GM10248 (cell line): ENCODE measurements at regions of chr6 and their contacts with region 1.

Region 1: GRCh38 chr6:136643850-136644596 is 93.8 kb upstream of the MAP7 start:
- DNase-seq: peak; percentile 56
- CTCF ChIP-seq: peak; percentile 80

Region 2: DNA sequence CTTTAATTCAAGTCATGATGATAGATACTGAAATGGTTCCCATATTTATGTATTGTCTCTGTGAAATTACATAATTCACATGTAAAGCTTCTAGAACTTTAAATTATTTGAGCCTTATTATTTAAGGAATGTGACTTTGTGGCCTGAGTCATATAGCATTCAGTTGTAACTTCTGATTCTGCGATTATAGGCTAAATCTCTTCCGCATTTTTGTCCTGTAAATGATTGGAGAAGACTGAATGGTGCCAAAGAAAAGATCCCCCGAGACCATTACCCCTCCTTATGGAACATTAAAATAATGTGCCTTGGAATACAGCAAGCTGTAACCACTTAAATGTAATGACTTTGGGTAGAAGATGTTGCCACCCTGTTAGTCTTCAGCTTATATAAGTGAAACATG is 30.5 kb before region 1 on chr6:
- CTCF ChIA-PET with region 1: interaction called, 19 read pairs
- POLR2A ChIA-PET with region 1: no interaction called
- DNase-seq: no peak
- CTCF ChIP-seq: no peak

Region 3: DNA sequence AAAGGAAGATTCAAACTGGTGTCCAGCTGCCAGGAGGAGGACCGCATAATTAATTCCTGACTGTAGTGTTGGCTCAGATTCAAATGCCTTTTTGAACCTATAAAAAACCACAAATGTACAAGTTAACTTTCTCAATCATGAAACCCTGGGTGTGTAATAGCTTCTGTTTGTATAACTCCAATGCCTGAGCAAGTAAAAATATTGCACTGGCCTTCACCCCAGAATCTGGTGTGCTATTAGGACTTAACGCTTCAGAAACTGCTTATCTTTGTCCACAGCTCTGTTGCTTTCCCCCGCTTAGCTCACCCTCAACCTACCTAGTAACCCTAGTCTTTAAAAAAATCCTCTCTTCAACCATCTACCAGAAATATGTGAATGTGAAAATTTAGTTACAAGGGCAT is 25.3 kb after region 1 on chr6:
- CTCF ChIA-PET with region 1: interaction called, 13 read pairs
- POLR2A ChIA-PET with region 1: no interaction called
- DNase-seq: no peak
- CTCF ChIP-seq: no peak

Region 4: GRCh38 chr6:136716917-136717715 is 73.1 kb after region 1 on chr6:
- CTCF ChIA-PET with region 1: interaction called, 20 read pairs
- POLR2A ChIA-PET with region 1: no interaction called
- DNase-seq: peak; percentile 41
- CTCF ChIP-seq: no peak

Region 5: DNA sequence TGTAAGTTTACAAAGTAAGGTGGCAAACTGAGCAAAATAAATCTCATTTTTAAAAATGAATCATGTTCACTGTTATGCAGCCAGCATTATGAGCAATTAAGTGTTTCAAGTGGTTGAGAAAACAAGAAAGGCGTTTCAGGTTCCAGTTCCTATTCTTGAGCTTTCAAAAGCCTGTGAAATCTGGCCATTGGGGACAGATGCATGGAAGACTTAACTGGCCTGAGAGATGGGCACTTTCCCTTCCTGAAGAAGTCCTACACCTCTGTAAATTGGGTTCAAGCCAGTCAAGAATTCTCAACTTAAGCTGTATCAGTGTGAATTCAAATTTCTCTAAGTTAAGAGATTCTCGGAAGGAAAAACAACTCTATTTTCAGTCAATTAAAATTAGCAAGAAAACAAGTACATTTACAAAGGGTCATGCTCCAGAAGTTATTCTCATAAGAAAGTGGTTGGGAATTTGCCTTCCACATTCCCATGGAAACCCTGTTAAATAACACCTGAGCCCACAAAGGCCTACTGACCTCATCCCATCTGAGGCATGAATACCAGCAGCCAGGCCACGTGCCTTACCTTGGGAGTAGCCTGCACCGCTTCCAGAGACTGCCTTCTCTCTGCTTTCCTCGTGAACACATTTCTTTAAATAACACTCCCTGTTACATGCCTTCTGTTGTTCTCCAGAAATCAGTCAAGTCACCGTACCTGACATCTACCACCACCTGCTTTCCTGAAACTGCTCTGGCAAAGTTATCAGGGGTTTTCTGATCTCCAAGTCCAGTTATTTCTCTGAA is 128.9 kb after region 1 on chr6:
- CTCF ChIA-PET with region 1: interaction called, 12 read pairs
- POLR2A ChIA-PET with region 1: no interaction called
- DNase-seq: peak; percentile 45
- CTCF ChIP-seq: no peak

Region 6: DNA sequence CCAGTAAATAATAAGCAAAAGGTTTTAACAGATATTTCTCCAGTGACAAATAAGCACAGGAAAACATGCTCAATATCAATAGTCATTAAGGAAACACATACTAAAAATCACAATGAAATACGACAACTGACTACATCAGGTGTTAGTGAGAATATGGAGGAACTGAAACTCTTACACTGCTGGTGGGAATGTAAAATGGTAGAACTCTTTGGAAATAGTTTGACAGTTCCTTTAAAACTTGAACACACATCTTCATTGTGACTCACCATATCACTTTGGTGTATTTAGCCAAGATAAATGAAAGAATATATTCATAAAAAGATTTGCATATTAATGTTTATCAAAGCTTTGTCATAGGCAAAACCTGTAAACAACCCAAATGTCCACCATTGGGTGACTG is 159.6 kb after region 1 on chr6:
- CTCF ChIA-PET with region 1: interaction called, 25 read pairs
- POLR2A ChIA-PET with region 1: no interaction called
- DNase-seq: no peak
- CTCF ChIP-seq: no peak